Prostate gland (tissue), 2 donors: ENCODE measurements at regions of chr15 and their contacts with region 1.

Region 1: DNA sequence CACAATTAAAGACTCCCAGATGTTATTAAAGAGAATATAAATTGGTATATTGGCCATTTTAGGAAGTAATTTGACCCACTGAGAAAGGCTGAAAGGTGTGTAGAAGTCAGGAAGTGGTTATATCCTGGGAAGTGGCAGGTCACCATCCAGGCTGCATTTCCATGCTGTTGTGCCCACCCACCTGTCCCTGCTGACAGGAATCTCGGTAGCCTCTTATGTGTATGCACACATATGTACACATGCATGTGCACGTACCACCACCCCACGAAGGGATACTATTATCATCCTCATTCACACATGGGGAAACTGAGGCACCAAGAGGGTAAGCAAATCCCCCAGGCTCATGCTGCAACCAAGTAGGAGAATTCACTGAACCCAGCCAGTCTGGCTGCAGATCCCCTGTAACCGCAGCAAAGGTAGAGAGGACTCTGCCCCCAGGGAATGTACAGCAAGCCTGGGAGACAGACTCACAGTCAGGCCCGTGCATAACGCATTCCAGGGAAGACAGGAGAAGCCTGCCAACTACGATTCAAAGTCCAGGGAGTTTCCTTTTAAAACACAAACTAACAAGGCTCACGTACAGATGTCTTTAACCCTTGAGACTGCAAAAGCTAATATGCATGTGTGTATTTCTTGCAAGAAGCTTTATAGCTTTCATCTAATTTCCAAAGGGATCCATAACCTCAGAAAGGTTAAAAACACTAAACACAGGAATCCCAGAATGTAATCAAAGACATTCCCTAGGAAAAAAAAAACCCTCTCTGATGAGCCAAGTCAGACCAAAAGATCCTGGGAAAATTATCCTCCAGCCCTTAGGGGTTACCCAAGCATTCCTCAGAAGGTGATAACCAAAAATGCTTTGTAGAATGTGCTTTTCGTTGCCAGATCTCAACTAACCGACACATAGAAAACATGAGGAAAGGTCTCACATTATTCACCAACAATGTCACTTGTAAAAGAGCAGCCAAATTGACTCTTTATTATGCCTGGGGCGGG is 129.6 kb downstream of the ADAMTS17 start:
- DNase-seq: no peak
- H3K4me3 ChIP-seq: no peak overlapping the region
- H3K27ac ChIP-seq: no peak overlapping the region
- H3K4me1 ChIP-seq: no peaks in the 10 kb centered on the region
- H3K27me3 ChIP-seq: no peaks in the 10 kb centered on the region
- CTCF ChIP-seq: no peak
- POLR2A ChIP-seq: no peak

Region 2: GRCh38 chr15:100229181-100230163 is 17.3 kb after region 1 on chr15:
- intact Hi-C with region 1: loop called (anchors 2 kb)
- DNase-seq: no peak
- H3K4me3 ChIP-seq: no peak overlapping the region
- H3K27ac ChIP-seq: no peak overlapping the region
- H3K4me1 ChIP-seq: no peaks in the 10 kb centered on the region
- H3K27me3 ChIP-seq: no peaks in the 10 kb centered on the region
- CTCF ChIP-seq: no peak
- POLR2A ChIP-seq: no peak